Transverse colon (tissue), 4 donors: ENCODE measurements at regions of chr9 and their contacts with region 1.

Region 1: GRCh38 chr9:10232352-10232930 is 380.4 kb downstream of the PTPRD start:
- DNase-seq: no peak
- H3K4me3 ChIP-seq: no peak overlapping the region
- H3K27ac ChIP-seq: no peak overlapping the region
- H3K4me1 ChIP-seq: no peaks in the 10 kb centered on the region
- H3K27me3 ChIP-seq: no peaks in the 10 kb centered on the region
- CTCF ChIP-seq: no peak
- EP300 ChIP-seq: no peak
- POLR2A ChIP-seq: no peak

Region 2: DNA sequence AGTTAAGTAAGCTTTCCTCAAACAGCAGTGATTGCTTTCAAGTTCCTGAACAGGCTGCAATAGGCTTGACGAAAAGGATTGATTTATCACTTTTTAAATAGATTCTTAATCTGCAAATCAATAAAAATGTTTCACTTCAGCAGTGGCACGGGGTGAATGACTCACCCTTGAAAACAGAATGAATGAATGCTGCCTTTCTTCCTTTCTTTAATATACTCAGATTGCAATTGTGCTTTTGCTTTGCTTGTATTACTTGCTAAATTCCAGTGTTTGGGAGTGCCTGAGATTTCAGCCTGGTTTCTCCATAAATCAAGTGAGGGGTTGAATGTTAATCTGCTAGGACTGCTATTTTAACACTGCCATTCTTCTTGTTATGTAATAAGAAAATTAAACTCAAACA is 913.4 kb before region 1 on chr9:
- in situ Hi-C with region 1: no loop called
- intact Hi-C with region 1: loop called (anchors 10 kb)
- DNase-seq: no peak
- H3K4me3 ChIP-seq: no peak overlapping the region
- H3K27ac ChIP-seq: no peak overlapping the region
- H3K4me1 ChIP-seq: no peaks in the 10 kb centered on the region
- H3K27me3 ChIP-seq: no peaks in the 10 kb centered on the region
- CTCF ChIP-seq: no peak
- EP300 ChIP-seq: no peak
- POLR2A ChIP-seq: no peak

Region 3: DNA sequence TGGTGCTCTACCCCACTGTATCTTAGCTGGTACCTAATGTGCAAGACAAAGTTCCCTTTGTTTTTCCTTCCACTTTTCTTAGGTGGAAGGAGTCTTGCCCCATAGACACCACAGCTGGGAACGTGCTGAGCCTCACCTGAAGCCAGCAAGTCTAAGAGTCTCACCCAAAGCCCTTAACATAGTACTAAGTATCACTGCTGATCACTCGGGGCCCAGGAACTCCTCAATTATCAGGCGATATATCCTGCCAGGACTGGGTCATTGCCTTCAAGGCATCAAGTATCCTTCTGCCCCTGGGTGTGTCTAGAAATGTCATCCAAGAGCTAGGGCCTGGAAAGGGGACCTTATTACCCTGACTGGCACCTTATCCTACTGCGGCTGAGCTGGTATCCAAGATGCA is 256.5 kb after region 1 on chr9:
- in situ Hi-C with region 1: no loop called
- intact Hi-C with region 1: no loop called
- DNase-seq: no peak
- H3K4me3 ChIP-seq: no peak overlapping the region
- H3K27ac ChIP-seq: no peak overlapping the region
- H3K4me1 ChIP-seq: no peaks in the 10 kb centered on the region
- H3K27me3 ChIP-seq: no peaks in the 10 kb centered on the region
- CTCF ChIP-seq: no peak
- EP300 ChIP-seq: no peak
- POLR2A ChIP-seq: no peak